AG04449 (cell line): ENCODE measurements at regions of chr7 and their contacts with region 1.

Region 1: GRCh38 chr7:95511716-95512260 is 26.0 kb downstream of the ASB4 start:
- DNase-seq: no peak
- H3K4me3 ChIP-seq: no peak overlapping the region
- CTCF ChIP-seq: peak; percentile 80

Region 2: GRCh38 chr7:95476904-95477594 is 34.7 kb before region 1 on chr7:
- CTCF ChIA-PET with region 1: interaction called, 15 read pairs
- POLR2A ChIA-PET with region 1: no interaction called
- DNase-seq: no peak
- H3K4me3 ChIP-seq: no peak overlapping the region
- CTCF ChIP-seq: peak; percentile 55

Region 3: DNA sequence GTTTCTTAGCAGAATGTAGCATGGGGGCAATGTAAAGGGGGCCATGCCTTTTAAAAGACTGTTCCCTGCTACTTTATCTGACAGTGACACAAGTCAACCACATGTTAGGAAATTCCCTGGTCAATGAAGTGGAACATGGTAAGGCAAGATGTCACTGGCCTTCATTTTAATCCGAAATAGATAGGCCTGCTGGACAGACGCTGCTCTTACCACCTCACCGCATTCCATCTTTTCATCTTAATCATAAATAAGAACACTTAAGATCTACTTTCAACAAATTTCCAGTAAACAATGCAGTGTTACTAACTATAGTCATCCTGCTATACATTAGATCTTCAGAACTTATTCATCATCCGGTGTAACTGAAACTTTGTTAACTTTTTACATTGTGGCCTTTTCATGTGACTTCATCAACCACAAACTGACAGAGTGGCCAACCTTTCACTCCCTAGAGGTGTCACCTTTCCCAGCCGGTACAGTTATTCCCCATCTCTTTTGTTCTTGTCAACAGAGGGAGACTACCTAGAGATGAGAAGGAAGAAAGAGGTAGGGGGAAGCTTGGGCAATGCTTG is 10.4 kb before region 1 on chr7:
- CTCF ChIA-PET with region 1: interaction called, 20 read pairs
- POLR2A ChIA-PET with region 1: no interaction called
- DNase-seq: no peak
- H3K4me3 ChIP-seq: no peak overlapping the region
- CTCF ChIP-seq: no peak

Region 4: GRCh38 chr7:95545078-95545498 is 33.3 kb after region 1 on chr7:
- CTCF ChIA-PET with region 1: interaction called, 12 read pairs
- POLR2A ChIA-PET with region 1: no interaction called
- DNase-seq: no peak
- H3K4me3 ChIP-seq: peak overlapping the region; percentile 24; the same call in 1 of the 2 replicates
- CTCF ChIP-seq: peak; percentile 61

Region 5: GRCh38 chr7:95690367-95690947 is 178.7 kb after region 1 on chr7:
- CTCF ChIA-PET with region 1: interaction called, 403 read pairs
- POLR2A ChIA-PET with region 1: no interaction called
- DNase-seq: no peak
- H3K4me3 ChIP-seq: no peak overlapping the region
- CTCF ChIP-seq: peak; percentile 12